CD4-positive, alpha-beta memory T cell (primary cell): ENCODE measurements at regions of chr9 and their contacts with region 1.

Region 1: GRCh38 chr9:111631071-111631971 is at the start of gene DNAJC25:
- DNase-seq: peak; percentile 96 to 98 (median 98)
- H3K4me3 ChIP-seq: peak within 1 kb of the TSS; percentile 69 to 86
- H3K4me3 Mint-ChIP-seq: peak within 1 kb of the TSS; percentile 94 to 99 (median 98)
- H3K27ac ChIP-seq: peak within 1 kb of the TSS; percentile 76
- H3K27ac Mint-ChIP-seq: peak within 1 kb of the TSS; percentile 88 to 97 (median 94)
- H3K4me1 ChIP-seq: peaks cover 21% of the 10 kb centered on the region
- H3K4me1 Mint-ChIP-seq: peaks cover 35 to 52% (median 43%) of the 10 kb centered on the region in 4 donors
- H3K27me3 ChIP-seq: no peaks in the 10 kb centered on the region
- H3K27me3 Mint-ChIP-seq: peaks cover 0 to 1% of the 10 kb centered on the region in 2 donors
- total RNA-seq, gene DNAJC25: 5.1 to 5.6 TPM

Region 2: DNA sequence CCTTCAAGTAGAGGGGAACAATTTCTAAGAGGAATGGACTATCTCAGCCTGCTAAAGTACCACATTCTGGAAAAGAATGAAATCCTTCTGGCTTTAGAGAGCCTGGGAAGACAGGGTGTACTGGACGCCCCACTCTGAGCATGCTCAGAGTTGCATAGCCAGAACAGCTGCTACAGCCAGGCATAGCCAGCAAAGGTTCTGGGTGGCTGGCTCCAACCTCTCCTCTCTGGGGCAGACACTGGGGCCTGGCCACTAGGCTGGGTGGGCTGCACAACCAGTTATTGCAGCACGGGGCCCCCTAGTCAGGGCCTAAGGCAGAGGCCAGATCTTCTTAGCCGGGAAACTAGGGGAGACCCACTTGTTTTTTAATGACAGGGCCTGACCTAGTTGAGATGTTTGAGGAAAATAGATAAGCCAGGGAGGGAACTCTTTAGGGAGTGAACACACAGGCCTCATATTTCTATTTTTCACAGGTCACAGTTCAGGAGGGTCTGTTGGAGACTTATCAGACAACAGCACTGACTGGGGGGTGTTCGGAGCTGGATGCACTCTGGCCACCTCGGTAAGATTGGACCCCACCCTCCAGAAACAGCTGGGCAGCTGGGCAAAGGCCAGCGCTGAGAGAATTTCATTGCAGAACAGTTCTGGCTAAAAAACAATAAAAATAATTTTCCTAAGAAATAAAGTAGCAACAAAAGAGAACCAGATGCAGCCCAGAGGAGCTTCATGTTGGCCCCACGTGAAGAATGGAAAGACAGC is 736.0 kb before region 1 on chr9:
- CTCF ChIA-PET with region 1: no interaction called
- POLR2A ChIA-PET with region 1: no interaction called
- intact Hi-C with region 1: no loop called
- DNase-seq: no peak
- H3K4me3 ChIP-seq: no peak overlapping the region
- H3K4me3 Mint-ChIP-seq: no peak overlapping the region
- H3K27ac ChIP-seq: no peak overlapping the region
- H3K27ac Mint-ChIP-seq: no peak overlapping the region
- H3K4me1 ChIP-seq: no peaks in the 10 kb centered on the region
- H3K4me1 Mint-ChIP-seq: no peaks in the 10 kb centered on the region
- H3K27me3 ChIP-seq: no peaks in the 10 kb centered on the region
- H3K27me3 Mint-ChIP-seq: no peaks in the 10 kb centered on the region

Region 3: GRCh38 chr9:111483862-111484571 is 147.3 kb before region 1 on chr9 and contains the start of gene ECPAS:
- CTCF ChIA-PET with region 1: no interaction called
- POLR2A ChIA-PET with region 1: interaction called, 11 read pairs
- intact Hi-C with region 1: loop called (anchors 1 kb)
- DNase-seq: peak; percentile 66 to 72 (median 71)
- H3K4me3 ChIP-seq: peak within 1 kb of the TSS; percentile 69 to 89
- H3K4me3 Mint-ChIP-seq: peak within 1 kb of the TSS; percentile 81 to 90 (median 86)
- H3K27ac ChIP-seq: peak within 1 kb of the TSS; percentile 83
- H3K27ac Mint-ChIP-seq: peak within 1 kb of the TSS; percentile 86 to 93 (median 89)
- H3K4me1 ChIP-seq: peaks cover 11% of the 10 kb centered on the region
- H3K4me1 Mint-ChIP-seq: peaks cover 23 to 37% (median 28%) of the 10 kb centered on the region in 4 donors
- H3K27me3 ChIP-seq: no peaks in the 10 kb centered on the region
- H3K27me3 Mint-ChIP-seq: no peaks in the 10 kb centered on the region
- total RNA-seq, gene ECPAS: 77.6 to 80.3 TPM

Region 4: DNA sequence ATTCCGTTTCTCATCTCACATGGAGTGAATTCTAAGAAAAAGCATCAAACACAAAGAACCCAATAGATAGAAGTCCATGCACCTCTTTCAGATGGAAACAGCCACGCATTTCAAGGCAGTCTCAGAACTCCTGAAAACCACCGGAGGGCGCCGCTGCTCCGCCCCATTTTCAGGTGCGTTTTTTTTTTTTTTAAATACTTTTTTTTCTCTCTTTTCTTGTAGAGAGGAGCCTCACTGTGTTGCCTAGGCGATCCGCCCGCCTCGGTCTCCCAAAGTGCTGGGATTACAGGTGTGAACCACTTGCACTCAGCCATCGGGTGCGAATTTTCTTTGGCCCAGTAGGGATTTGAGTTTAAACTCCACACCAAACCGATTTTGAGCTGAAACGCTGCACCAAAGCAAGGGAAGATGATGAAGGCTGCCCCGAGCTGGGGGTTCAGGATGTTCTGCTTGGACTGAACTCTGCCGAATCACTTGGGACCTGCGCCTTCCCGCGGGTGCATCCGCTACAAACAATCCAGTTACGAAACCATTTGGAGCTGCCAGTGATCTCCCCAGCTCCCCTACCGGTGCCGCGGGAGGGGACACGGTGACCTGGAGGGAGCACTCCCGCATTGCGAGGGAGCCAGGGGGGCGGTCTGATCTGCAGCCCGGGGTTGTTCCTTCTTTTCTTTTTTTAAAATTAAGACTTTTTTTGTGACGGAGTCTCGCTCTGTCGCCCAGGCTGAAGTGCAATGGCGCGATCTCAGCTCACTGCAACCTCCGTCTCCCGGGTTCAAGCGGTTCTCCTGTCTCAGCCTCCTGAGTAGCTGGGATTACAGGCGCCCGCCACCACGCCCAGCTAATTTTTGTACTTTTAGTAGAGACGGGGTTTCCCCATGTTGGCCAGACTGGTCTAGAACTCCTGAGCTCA is 33.2 kb before region 1 on chr9:
- CTCF ChIA-PET with region 1: interaction called, 4 read pairs
- POLR2A ChIA-PET with region 1: no interaction called
- intact Hi-C with region 1: loop called (anchors 1 kb)
- DNase-seq: peak; percentile 61 to 72 (median 65)
- H3K4me3 ChIP-seq: peak overlapping the region; percentile 47 to 59
- H3K4me3 Mint-ChIP-seq: peak overlapping the region; percentile 88 to 96 (median 92)
- H3K27ac ChIP-seq: no peak overlapping the region
- H3K27ac Mint-ChIP-seq: peak overlapping the region in 6 of 7 donors; percentile 41 to 81 (median 66)
- H3K4me1 ChIP-seq: peaks cover 21% of the 10 kb centered on the region
- H3K4me1 Mint-ChIP-seq: peaks cover 9 to 29% (median 17%) of the 10 kb centered on the region in 4 donors
- H3K27me3 ChIP-seq: peaks cover 8% of the 10 kb centered on the region
- H3K27me3 Mint-ChIP-seq: peaks cover 19 to 22% of the 10 kb centered on the region in 2 donors

Region 5: DNA sequence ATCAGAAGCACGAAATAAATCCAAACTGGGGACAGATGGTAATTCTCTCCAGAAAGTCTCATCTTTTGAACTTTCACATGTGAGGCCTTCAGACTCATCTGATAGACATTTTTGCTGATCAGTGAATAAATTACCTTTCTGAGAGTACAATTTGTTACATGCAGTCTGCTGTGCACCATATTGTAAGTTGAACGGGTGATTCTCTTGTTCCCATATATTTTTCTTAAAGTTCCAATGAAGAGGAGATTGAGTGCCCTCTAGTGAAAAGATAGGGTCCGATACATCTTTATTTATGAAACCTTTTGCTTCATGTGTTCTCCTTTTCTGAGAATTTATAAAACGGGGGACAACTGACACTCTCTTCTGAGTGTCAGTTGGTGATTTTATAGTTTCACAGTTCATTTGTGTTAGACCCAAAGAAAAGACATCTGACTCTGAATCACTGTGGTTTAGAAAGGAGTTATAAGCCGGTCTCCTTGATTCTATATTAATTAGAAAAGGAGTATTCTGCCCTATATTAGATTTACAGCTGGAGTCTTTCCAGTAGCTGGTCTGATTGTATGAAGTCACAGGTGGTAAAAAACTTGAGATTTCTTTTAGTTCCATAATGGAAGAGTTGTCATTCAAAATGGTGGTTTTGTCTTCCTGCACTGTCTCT is 60.5 kb after region 1 on chr9:
- CTCF ChIA-PET with region 1: no interaction called
- POLR2A ChIA-PET with region 1: no interaction called
- intact Hi-C with region 1: loop called (anchors 2 kb)
- DNase-seq: peak in 4 of 5 donors; percentile 4 to 14 (median 10)
- H3K4me3 ChIP-seq: no peak overlapping the region
- H3K4me3 Mint-ChIP-seq: no peak overlapping the region
- H3K27ac ChIP-seq: no peak overlapping the region
- H3K27ac Mint-ChIP-seq: peak overlapping the region in 1 of 7 donors; percentile 16
- H3K4me1 ChIP-seq: no peaks in the 10 kb centered on the region
- H3K4me1 Mint-ChIP-seq: no peaks in the 10 kb centered on the region
- H3K27me3 ChIP-seq: no peaks in the 10 kb centered on the region
- H3K27me3 Mint-ChIP-seq: no peaks in the 10 kb centered on the region

Region 6: DNA sequence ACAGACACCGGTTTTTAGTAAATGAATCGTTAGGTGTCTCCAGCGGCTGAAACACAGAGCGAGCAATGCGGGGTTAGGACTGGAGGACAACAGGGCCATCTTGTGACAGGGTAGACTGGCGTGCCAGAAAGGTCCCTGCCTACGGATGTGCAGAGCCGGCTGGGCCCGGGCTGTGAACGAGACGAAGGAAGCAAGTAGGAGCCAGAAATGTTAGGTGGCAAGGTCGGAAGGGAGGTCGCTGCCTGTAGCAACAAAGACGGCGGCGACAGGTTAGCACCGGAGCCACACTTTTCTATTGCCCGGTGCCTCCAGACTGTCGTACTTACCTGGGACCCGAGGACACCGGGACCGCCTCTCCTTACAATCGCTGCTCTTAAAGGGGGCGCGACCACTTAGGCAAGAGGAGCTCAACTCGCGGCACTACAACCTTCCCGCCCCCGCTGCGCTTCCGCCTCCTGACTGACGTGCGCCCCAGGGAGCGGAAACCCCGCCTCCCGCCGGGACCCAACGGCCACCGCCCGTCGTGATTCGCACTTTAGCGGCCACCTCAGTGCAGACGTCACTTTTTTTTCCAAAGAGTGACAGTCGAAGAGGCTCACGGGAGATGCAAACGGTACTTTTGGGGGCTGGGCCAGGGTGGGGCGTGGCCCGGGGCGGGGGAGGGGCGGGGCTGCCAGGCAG is 1086.5 kb after region 1 on chr9 and contains the start of gene INIP:
- CTCF ChIA-PET with region 1: no interaction called
- POLR2A ChIA-PET with region 1: no interaction called
- intact Hi-C with region 1: loop called (anchors 2 kb)
- DNase-seq: peak; percentile 97 to 98 (median 98)
- H3K4me3 ChIP-seq: peak within 1 kb of the TSS; percentile 78 to 95
- H3K4me3 Mint-ChIP-seq: peak within 1 kb of the TSS; percentile 93 to 99 (median 98)
- H3K27ac ChIP-seq: peak within 1 kb of the TSS; percentile 88
- H3K27ac Mint-ChIP-seq: peak within 1 kb of the TSS; percentile 94 to 99 (median 99)
- H3K4me1 ChIP-seq: peaks cover 25% of the 10 kb centered on the region
- H3K4me1 Mint-ChIP-seq: peaks cover 15 to 37% (median 26%) of the 10 kb centered on the region in 4 donors
- H3K27me3 ChIP-seq: no peaks in the 10 kb centered on the region
- H3K27me3 Mint-ChIP-seq: no peaks in the 10 kb centered on the region
- total RNA-seq, gene INIP: 25.2 to 33.4 TPM

Region 7: GRCh38 chr9:113340017-113340699 is 1708.8 kb after region 1 on chr9 and contains the start of gene WDR31:
- CTCF ChIA-PET with region 1: no interaction called
- POLR2A ChIA-PET with region 1: no interaction called
- intact Hi-C with region 1: loop called (anchors 1 kb)
- DNase-seq: peak; percentile 61 to 78 (median 75)
- H3K4me3 ChIP-seq: peak within 1 kb of the TSS; percentile 8 to 79
- H3K4me3 Mint-ChIP-seq: peak within 1 kb of the TSS; percentile 82 to 92 (median 87)
- H3K27ac ChIP-seq: peak within 1 kb of the TSS; percentile 28
- H3K27ac Mint-ChIP-seq: peak within 1 kb of the TSS in 6 of 7 donors; percentile 51 to 73 (median 56)
- H3K4me1 ChIP-seq: peaks cover 10% of the 10 kb centered on the region
- H3K4me1 Mint-ChIP-seq: peaks cover 7 to 23% (median 15%) of the 10 kb centered on the region in 4 donors
- H3K27me3 ChIP-seq: no peaks in the 10 kb centered on the region
- H3K27me3 Mint-ChIP-seq: peaks cover 1 to 4% of the 10 kb centered on the region in 2 donors
- total RNA-seq, gene WDR31: 0.33 to 0.67 TPM